Calu3 (cell line): ENCODE measurements at regions of chr6 and their contacts with region 1.

Region 1: DNA sequence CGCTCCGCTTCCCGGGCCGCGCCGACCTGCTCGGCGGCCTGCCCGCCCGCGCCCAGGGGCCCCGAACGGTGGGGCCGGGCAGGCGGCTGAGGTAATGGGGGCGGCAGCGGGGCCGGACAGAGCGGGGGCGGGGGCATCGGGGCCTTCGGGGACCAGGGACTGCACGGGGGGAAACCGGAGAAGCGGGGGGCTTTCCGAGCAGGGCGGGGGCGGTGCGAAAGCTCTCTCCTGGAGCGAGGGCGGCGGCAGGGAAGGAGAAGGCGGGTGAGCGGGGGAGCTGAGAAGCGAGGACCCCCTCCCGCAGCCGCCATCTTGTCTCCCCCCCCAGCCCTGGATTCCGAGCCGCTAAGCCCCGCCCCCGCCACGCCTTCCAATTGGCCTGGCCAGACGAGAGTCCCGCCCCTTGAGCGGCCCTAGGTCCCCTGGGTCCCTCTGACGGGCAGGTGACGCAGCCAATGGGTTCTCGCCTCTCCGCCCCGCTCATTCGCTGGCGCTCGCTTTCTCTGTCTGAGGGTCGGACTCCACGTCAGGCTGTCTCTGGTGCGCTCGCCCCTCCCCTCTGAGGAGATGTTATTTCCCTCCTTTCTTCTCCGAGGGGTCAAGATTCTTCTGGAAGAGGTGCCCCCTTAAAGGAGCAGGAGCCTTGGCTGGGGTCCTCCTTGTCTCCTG is 470 bp downstream of the BRPF3 start:
- DNase-seq: peak; percentile 100
- H3K4me3 Mint-ChIP-seq: peak overlapping the region; percentile 70
- H3K27ac Mint-ChIP-seq: peak overlapping the region; percentile 57
- H3K4me1 Mint-ChIP-seq: peaks cover 20% of the 10 kb centered on the region
- H3K27me3 Mint-ChIP-seq: no peaks in the 10 kb centered on the region
- CTCF ChIP-seq: no peak

Region 2: DNA sequence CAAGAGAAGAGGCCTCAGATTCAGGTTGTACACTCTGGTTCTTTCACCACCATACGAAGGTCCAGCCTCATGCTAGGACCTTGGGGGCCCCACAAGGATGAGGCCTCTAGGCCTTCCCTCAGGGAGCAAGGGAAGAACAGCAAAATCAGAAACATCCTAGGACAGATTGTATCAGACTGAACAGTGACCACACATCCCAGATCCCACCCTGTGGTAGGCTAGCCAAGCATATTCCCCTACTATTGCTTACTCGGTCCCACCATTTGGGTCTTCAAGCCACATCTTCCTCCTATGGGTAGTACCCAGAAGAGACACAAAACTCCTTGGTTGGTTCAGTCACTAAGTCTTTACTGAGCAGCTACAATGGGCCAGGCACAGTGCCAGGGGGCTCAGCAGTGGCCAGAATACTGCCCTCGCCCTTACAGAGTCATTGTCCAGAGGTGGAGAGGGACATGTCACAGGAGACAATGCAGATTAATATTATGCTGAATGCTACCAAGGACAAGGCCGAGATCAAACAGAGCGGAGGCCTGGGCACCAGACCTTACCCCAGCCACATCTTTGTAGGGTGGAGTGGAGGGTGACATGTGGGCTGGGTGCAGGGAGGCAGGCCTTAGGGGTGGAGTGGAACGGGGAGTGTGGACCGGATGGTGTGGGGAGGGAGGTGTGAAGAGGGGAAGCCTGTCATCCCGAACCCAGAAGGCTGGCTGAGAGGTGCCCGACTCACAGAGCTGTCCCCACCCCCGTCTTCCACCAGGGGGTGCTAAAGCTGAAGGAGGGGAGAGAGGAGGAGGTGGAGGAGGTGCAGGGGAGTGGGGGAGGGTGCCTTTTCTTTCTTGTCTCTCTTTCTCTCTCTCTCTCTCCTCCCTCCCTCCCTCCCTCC is 73.5 kb before region 1 on chr6:
- CTCF ChIA-PET with region 1: no interaction called
- intact Hi-C with region 1: loop called (anchors 5 kb)
- DNase-seq: peak; percentile 94
- H3K4me3 Mint-ChIP-seq: peak overlapping the region; percentile 9
- H3K27ac Mint-ChIP-seq: peak overlapping the region; percentile 17
- H3K4me1 Mint-ChIP-seq: peaks cover 25% of the 10 kb centered on the region
- H3K27me3 Mint-ChIP-seq: no peaks in the 10 kb centered on the region
- CTCF ChIP-seq: peak; percentile 77

Region 3: GRCh38 chr6:36131511-36132245 is 65.3 kb before region 1 on chr6:
- CTCF ChIA-PET with region 1: no interaction called
- intact Hi-C with region 1: loop called (anchors 2 kb)
- DNase-seq: peak; percentile 62
- H3K4me3 Mint-ChIP-seq: peak overlapping the region; percentile 72
- H3K27ac Mint-ChIP-seq: peak overlapping the region; percentile 59
- H3K4me1 Mint-ChIP-seq: peaks cover 39% of the 10 kb centered on the region
- H3K27me3 Mint-ChIP-seq: no peaks in the 10 kb centered on the region
- CTCF ChIP-seq: no peak

Region 4: DNA sequence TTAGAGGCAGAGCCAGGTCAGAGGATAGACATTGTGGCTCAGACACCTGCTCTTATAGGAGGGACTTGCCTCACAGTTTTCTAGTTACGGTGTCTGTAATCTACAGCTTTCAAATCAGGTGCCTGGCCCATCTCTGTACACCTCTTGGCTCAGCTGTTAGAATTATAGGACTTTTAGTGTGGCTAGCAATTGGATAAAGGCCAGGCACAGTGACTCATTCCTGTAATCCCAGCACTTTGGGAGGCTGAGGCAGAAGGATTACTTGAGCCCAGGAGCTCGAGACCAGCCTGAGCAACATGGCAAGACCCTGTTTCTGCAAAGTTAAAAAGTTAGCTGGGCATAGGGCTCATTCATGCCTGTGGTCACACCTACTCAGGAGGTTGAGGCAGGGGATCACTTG is 19.5 kb after region 1 on chr6:
- CTCF ChIA-PET with region 1: no interaction called
- intact Hi-C with region 1: no loop called
- DNase-seq: no peak
- H3K4me3 Mint-ChIP-seq: no peak overlapping the region
- H3K27ac Mint-ChIP-seq: no peak overlapping the region
- H3K4me1 Mint-ChIP-seq: no peaks in the 10 kb centered on the region
- H3K27me3 Mint-ChIP-seq: no peaks in the 10 kb centered on the region
- CTCF ChIP-seq: no peak

Region 5: GRCh38 chr6:36563237-36563927 is 366.4 kb after region 1 on chr6:
- CTCF ChIA-PET with region 1: no interaction called
- intact Hi-C with region 1: no loop called
- DNase-seq: no peak
- H3K4me3 Mint-ChIP-seq: no peak overlapping the region
- H3K27ac Mint-ChIP-seq: no peak overlapping the region
- H3K4me1 Mint-ChIP-seq: peaks cover 13% of the 10 kb centered on the region
- H3K27me3 Mint-ChIP-seq: no peaks in the 10 kb centered on the region
- CTCF ChIP-seq: no peak